ENCODE measurements at regions of chr4 and their contacts with region 1.

Region 1: GRCh38 chr4:53132132-53132896 is 233.5 kb downstream of the SCFD2 start:
- DNase-seq: no peak
- H3K4me3 Mint-ChIP-seq: no peak overlapping the region
- H3K27ac Mint-ChIP-seq: peak overlapping the region; percentile 84
- H3K4me1 Mint-ChIP-seq: peaks cover 24% of the 10 kb centered on the region
- H3K27me3 Mint-ChIP-seq: no peaks in the 10 kb centered on the region

Region 2: DNA sequence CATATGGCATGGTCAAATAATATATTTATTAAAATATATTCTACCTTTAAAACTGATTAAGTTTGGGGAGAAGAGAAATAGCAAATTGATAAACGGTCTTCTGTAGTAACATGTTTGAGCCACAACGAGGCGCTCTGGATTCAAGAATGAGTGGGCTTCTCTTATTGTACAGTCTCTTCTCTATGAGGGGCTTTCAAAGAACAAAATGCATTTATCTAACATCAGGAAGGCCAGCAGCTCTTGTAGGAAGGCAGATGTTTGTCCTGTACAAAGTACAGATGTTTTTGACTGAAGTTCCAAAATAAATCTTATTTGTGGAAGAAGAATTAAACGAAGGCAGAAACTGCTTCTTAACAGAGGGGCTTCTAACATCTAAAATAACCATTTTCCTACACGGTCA is 116.6 kb before region 1 on chr4:
- intact Hi-C with region 1: loop called (anchors 10 kb)
- DNase-seq: no peak
- H3K4me3 Mint-ChIP-seq: no peak overlapping the region
- H3K27ac Mint-ChIP-seq: no peak overlapping the region
- H3K4me1 Mint-ChIP-seq: peaks cover 28% of the 10 kb centered on the region
- H3K27me3 Mint-ChIP-seq: no peaks in the 10 kb centered on the region

Region 3: DNA sequence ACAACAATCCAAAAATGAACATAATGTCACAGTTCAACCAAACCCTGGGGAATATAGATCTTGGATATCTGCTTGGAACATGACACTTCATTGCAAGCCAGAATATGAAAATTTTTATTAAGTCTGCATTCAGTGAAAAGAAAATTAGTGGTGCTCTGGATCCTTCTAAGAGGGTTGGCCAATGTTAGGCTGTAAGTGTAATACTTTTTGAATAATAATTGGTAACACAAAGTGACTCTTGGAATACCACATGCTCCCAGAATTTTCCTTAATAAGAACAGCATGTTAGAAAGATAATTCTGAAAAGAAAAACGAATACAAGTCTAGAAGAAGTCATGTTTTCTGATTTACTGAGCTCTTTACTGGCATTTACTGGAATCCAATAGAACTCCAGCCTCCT is 94.4 kb before region 1 on chr4:
- intact Hi-C with region 1: loop called (anchors 1 kb)
- DNase-seq: no peak
- H3K4me3 Mint-ChIP-seq: no peak overlapping the region
- H3K27ac Mint-ChIP-seq: no peak overlapping the region
- H3K4me1 Mint-ChIP-seq: peaks cover 13% of the 10 kb centered on the region
- H3K27me3 Mint-ChIP-seq: no peaks in the 10 kb centered on the region

Region 4: DNA sequence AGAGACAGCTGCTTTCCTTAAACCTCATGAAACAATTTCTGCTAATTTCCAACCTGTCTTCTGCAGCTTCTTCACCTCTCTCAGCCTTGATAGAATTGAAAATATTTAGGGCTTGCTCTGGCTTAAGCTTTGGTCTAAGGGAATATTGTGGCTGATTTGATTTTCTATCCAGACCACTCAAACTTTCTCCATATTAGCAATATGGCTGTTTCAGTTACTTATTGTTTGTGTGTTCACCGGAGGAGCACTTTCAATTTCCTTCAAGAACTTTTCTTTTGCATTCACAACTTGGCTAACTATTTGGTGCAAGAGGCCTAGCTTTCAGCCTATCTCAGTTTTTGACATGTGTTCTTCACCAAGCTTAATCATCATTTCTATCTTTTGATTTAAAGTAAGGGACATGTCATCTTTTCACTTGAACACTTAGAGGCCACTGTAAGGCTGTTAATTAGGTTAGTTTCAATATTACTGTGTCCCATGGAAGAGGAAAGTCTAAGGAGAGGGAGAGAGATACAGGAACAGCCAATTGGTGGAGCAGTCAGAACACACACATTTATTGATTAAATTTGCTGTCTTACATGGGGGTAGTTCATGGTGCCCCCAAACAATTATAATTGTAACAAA is 57.0 kb before region 1 on chr4:
- intact Hi-C with region 1: loop called (anchors 2 kb)
- DNase-seq: no peak
- H3K4me3 Mint-ChIP-seq: no peak overlapping the region
- H3K27ac Mint-ChIP-seq: peak overlapping the region; percentile 38
- H3K4me1 Mint-ChIP-seq: peaks cover 9% of the 10 kb centered on the region
- H3K27me3 Mint-ChIP-seq: no peaks in the 10 kb centered on the region

Region 5: GRCh38 chr4:53101191-53101581 is 31.1 kb before region 1 on chr4:
- intact Hi-C with region 1: loop called (anchors 1 kb)
- DNase-seq: no peak
- H3K4me3 Mint-ChIP-seq: no peak overlapping the region
- H3K27ac Mint-ChIP-seq: peak overlapping the region; percentile 82
- H3K4me1 Mint-ChIP-seq: peaks cover 13% of the 10 kb centered on the region
- H3K27me3 Mint-ChIP-seq: no peaks in the 10 kb centered on the region

Region 6: GRCh38 chr4:53113431-53114225 is 18.7 kb before region 1 on chr4:
- intact Hi-C with region 1: loop called (anchors 1 kb)
- DNase-seq: no peak
- H3K4me3 Mint-ChIP-seq: no peak overlapping the region
- H3K27ac Mint-ChIP-seq: peak overlapping the region; percentile 83
- H3K4me1 Mint-ChIP-seq: peaks cover 23% of the 10 kb centered on the region
- H3K27me3 Mint-ChIP-seq: no peaks in the 10 kb centered on the region

Region 7: GRCh38 chr4:53196882-53197771 is 64.8 kb after region 1 on chr4:
- intact Hi-C with region 1: no loop called
- DNase-seq: no peak
- H3K4me3 Mint-ChIP-seq: no peak overlapping the region
- H3K27ac Mint-ChIP-seq: no peak overlapping the region
- H3K4me1 Mint-ChIP-seq: no peaks in the 10 kb centered on the region
- H3K27me3 Mint-ChIP-seq: no peaks in the 10 kb centered on the region

Region 8: GRCh38 chr4:53489279-53489889 is 357.1 kb after region 1 on chr4:
- intact Hi-C with region 1: no loop called
- DNase-seq: no peak
- H3K4me3 Mint-ChIP-seq: no peak overlapping the region
- H3K27ac Mint-ChIP-seq: no peak overlapping the region
- H3K4me1 Mint-ChIP-seq: no peaks in the 10 kb centered on the region
- H3K27me3 Mint-ChIP-seq: peaks cover 24% of the 10 kb centered on the region

Region 9: GRCh38 chr4:54064295-54065111 is 932.2 kb after region 1 on chr4 and contains the start of gene CHIC2:
- intact Hi-C with region 1: loop called (anchors 5 kb)
- DNase-seq: peak; percentile 96
- H3K4me3 Mint-ChIP-seq: peak within 1 kb of the TSS; percentile 92
- H3K27ac Mint-ChIP-seq: peak within 1 kb of the TSS; percentile 87
- H3K4me1 Mint-ChIP-seq: peaks cover 48% of the 10 kb centered on the region
- H3K27me3 Mint-ChIP-seq: peaks cover 3% of the 10 kb centered on the region
- total RNA-seq, gene CHIC2: 18.8 and 22.5 TPM in 2 replicates

Measured in activated T-helper 2 cell treated with anti-CD3 and anti-CD28 coated beads, Interferon-gamma antibody, Interleukin-2, Interleukin-4, amounts not matched to agents 10 μg/mL and 5 μg/mL and 100 μg/mL, durations not matched to agents 14 hours and 24 hours and 36 hours (primary cell).